Activated CD4-positive, alpha-beta T cell treated with anti-CD3 and anti-CD28 coated beads, Interleukin-2, amount 10 ng/mL, durations not matched to agents 24 days and 14 days (primary cell): ENCODE measurements at regions of chr7 and their contacts with region 1.

Region 1: GRCh38 chr7:73738612-73739374 is at the start of gene ABHD11:
- DNase-seq: peak; percentile 99
- H3K4me3 Mint-ChIP-seq: peak within 1 kb of the TSS; percentile 96
- H3K27ac Mint-ChIP-seq: peak within 1 kb of the TSS; percentile 96
- H3K4me1 Mint-ChIP-seq: peaks cover 11% of the 10 kb centered on the region
- H3K27me3 Mint-ChIP-seq: peaks cover 3% of the 10 kb centered on the region
- total RNA-seq, gene ABHD11: 20.8 and 23.0 TPM in 2 replicates

Region 2: DNA sequence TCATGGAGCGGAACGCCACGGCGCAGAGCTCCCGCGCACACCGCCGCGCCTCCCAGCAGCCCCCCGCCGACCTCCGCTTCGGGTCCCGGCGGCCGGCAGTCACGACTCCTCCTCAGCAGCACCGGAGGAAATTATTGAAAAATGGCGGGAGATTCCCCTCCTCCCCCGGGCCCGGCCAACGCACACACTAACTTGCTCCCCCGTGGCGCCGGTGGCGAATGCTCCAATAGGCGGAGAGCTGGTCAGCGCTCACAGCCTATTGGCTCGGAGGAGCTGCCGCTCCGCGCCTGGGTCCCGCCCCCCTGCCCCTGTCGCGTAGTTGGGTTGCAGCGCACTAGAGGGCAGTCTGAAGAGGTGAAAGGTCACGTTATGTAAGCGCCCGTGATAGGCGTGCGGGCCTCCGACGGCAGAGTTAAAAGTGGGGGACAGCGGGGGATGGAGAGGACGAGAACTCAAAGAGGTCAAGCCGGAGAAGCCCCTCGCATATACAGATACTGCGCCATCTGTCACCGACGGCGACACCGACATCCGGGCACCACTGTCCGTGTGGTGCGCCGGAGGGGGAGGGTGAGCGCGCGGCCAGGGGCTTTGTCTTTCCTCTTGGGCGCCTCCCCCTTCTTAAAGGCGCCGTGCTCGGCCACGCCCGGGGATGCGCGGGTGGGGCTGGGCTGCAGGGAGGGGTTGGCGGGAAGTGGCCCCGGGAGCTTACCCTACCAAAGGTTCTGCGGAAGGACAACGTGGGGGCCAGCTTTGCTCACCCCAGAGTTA is 216.5 kb before region 1 on chr7 and contains the start of gene BAZ1B:
- intact Hi-C with region 1: loop called (anchors 1 kb)
- DNase-seq: peak; percentile 99
- H3K4me3 Mint-ChIP-seq: peak within 1 kb of the TSS; percentile 94
- H3K27ac Mint-ChIP-seq: peak within 1 kb of the TSS; percentile 94
- H3K4me1 Mint-ChIP-seq: peaks cover 50% of the 10 kb centered on the region
- H3K27me3 Mint-ChIP-seq: no peaks in the 10 kb centered on the region
- total RNA-seq, gene BAZ1B: 110 and 112 TPM in 2 replicates

Region 3: DNA sequence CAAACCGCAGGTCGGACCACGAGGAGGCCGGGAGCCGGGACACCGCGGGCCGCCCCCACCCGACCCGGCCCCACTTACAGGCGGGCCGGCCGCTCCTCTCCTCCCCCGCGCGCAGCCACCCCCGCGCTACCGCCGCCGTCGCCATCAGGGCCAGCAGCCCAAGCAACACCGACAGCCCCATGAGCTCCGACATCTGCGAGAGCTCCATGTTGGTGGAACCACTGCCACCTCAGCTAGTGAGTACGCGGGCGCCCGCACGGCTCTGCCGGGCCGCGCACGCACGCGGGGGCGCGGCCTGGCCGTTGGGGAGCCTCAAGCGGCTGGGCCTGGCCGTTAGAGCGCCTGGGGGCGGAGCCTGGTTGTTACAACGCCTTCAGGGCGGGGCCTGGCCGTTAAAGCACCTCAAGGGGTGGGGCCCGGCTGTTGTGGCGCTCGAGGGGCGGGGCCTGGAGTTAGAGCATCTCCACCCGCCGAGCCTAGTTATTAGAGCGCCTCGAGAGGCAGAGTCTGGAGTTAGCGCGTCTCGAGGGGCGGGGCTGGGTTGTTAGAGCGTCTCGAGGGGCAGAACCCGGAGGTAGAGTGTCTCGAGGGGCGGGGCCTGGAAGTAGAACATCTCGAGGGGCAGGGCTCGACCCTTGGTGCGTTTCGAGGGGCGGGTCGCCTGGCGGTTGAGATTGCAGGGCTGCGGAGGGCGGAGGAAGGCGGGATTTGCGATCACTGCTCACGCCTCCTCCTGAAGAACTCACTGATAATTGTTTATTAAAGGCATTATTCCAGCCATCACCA is 160.3 kb before region 1 on chr7 and contains the start of gene TBL2:
- intact Hi-C with region 1: loop called (anchors 1 kb)
- DNase-seq: peak; percentile 100
- H3K4me3 Mint-ChIP-seq: peak within 1 kb of the TSS; percentile 99
- H3K27ac Mint-ChIP-seq: peak within 1 kb of the TSS; percentile 97
- H3K4me1 Mint-ChIP-seq: peaks cover 28% of the 10 kb centered on the region
- H3K27me3 Mint-ChIP-seq: no peaks in the 10 kb centered on the region
- total RNA-seq, gene TBL2: 41.4 and 49.1 TPM in 2 replicates

Region 4: DNA sequence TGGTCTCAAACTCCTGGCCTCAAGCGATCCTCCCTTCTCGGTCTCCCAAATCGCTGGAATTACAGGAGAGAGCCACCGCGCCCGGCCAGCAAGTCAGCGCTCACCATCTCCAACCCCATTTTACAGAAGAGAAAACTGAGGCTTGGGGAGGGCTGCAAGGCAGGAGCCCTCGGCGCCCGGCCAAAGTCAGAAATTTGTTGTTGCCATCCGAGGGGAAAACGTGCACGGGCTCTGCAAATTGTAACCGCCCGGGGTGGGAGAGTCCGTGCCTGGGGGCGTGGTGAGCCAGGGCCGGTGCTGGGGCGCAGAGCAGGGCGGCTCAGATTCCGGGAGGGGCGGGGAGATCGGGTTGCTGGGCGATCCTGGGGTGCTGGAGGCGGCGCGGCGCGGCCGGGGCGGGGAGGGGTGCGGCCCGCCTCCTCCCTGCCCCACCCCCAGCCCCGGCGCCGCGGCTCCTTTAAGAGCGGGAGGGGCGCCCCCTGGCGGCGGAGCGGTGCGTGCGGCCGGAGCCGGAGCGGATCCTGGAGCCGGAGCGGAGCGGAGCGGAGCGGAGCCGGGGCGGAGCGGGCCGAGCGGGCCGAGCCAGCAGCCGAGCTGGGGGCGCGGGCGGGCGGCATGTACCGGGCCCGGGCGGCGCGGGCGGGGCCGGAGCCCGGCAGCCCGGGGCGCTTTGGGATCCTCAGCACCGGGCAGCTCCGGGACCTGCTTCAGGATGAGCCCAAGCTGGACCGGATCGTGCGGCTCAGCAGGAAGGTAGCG is 71.3 kb before region 1 on chr7 and contains the start of gene VPS37D:
- intact Hi-C with region 1: loop called (anchors 1 kb)
- DNase-seq: peak; percentile 98
- H3K4me3 Mint-ChIP-seq: peak within 1 kb of the TSS; percentile 81
- H3K27ac Mint-ChIP-seq: no peak within 1 kb of the TSS
- H3K4me1 Mint-ChIP-seq: peaks cover 13% of the 10 kb centered on the region
- H3K27me3 Mint-ChIP-seq: peaks cover 46% of the 10 kb centered on the region
- total RNA-seq, gene VPS37D: 0.40 and 0.47 TPM in 2 replicates

Region 5: GRCh38 chr7:73718905-73719805 is 19.6 kb before region 1 on chr7 and contains the start of gene STX1A:
- intact Hi-C with region 1: loop called (anchors 1 kb)
- DNase-seq: peak; percentile 93
- H3K4me3 Mint-ChIP-seq: peak within 1 kb of the TSS; percentile 92
- H3K27ac Mint-ChIP-seq: peak within 1 kb of the TSS; percentile 91
- H3K4me1 Mint-ChIP-seq: peaks cover 33% of the 10 kb centered on the region
- H3K27me3 Mint-ChIP-seq: peaks cover 19% of the 10 kb centered on the region
- total RNA-seq, gene STX1A: 19.0 and 19.4 TPM in 2 replicates